ENCODE measurements at regions of chr16 and their contacts with region 1.

Region 1: GRCh38 chr16:46853713-46854443 is 22.9 kb upstream of the C16orf87 start:
- DNase-seq: peak; percentile 78
- CTCF ChIP-seq: peak; percentile 65

Region 2: DNA sequence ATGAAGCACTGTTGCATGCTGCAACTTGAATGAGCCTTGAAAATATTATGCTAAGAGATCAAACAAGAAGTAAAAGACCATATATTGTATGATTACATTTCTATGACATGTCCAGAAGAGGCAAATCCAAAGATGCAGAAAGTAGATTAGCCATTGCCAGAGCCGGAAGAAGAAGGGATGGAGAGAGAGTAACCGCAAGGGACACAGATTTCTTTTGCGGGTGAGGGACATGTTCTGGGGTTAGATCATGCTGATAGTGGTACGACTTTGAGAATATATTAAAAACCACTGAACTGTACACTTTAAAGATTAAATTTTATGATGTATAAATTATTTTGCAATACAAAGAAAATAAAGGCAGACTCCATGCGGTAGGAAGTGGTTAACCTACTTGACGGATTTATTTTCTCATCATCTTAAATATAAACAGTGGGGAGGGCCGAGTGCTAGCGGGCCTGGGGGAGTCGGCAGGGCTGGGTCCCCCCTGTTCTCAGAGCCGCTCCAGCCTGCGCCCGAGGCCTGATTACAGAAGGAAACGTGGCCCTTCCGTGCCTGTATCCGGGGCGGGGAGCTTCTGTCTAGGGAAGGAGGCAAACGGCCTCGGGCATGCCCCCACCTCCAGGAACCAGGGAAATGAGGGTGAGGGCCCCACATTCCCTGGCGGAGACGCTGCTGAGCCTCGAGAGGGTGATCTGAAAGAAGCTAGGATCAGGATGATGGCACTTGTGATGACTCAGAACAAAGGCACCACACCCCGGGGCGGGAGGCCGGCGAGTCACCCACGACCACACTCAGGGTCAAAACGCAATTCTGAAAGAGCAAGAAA is 280.7 kb before region 1 on chr16:
- CTCF ChIA-PET with region 1: no interaction called
- POLR2A ChIA-PET with region 1: no interaction called
- DNase-seq: peak; percentile 25
- CTCF ChIP-seq: no peak

Region 3: GRCh38 chr16:46765050-46765449 is 88.8 kb before region 1 on chr16:
- CTCF ChIA-PET with region 1: no interaction called
- POLR2A ChIA-PET with region 1: no interaction called
- DNase-seq: no peak
- CTCF ChIP-seq: no peak

Region 4: GRCh38 chr16:46812781-46813540 is 40.9 kb before region 1 on chr16:
- CTCF ChIA-PET with region 1: no interaction called
- POLR2A ChIA-PET with region 1: no interaction called
- DNase-seq: no peak
- CTCF ChIP-seq: no peak

Region 5: DNA sequence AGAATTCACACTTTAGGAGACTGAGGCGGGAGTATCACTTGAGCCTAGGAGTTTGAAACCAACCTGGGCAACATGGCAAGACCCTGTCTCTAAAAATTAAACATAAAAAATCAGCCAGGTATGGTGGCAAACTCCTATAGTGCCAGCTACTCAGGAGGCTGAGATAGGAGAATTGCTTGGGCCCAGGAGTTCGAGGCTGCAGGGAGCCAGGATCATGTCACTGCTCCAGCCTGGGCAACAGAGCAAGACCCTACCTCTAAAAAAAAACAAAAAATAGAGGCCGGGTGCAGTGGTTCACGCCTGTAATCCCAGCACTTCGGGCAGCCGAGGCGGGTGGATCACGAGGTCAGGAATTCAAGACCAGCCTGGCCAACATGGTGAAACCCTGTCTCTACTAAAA is 21.4 kb after region 1 on chr16:
- CTCF ChIA-PET with region 1: interaction called, 15 read pairs
- POLR2A ChIA-PET with region 1: no interaction called
- DNase-seq: no peak
- CTCF ChIP-seq: no peak

Region 6: GRCh38 chr16:46908540-46909372 is 54.9 kb after region 1 on chr16:
- CTCF ChIA-PET with region 1: interaction called, 128 read pairs
- POLR2A ChIA-PET with region 1: no interaction called
- DNase-seq: peak; percentile 66
- CTCF ChIP-seq: peak; percentile 63

Region 7: GRCh38 chr16:46929378-46930332 is 75.8 kb after region 1 on chr16:
- CTCF ChIA-PET with region 1: interaction called, 78 read pairs
- POLR2A ChIA-PET with region 1: no interaction called
- DNase-seq: peak; percentile 89
- CTCF ChIP-seq: peak; percentile 91

Region 8: GRCh38 chr16:47058295-47059086 is 204.6 kb after region 1 on chr16:
- CTCF ChIA-PET with region 1: no interaction called
- POLR2A ChIA-PET with region 1: no interaction called
- DNase-seq: no peak
- CTCF ChIP-seq: no peak